ENCODE measurements at regions of chr10 and their contacts with region 1.

Region 1: DNA sequence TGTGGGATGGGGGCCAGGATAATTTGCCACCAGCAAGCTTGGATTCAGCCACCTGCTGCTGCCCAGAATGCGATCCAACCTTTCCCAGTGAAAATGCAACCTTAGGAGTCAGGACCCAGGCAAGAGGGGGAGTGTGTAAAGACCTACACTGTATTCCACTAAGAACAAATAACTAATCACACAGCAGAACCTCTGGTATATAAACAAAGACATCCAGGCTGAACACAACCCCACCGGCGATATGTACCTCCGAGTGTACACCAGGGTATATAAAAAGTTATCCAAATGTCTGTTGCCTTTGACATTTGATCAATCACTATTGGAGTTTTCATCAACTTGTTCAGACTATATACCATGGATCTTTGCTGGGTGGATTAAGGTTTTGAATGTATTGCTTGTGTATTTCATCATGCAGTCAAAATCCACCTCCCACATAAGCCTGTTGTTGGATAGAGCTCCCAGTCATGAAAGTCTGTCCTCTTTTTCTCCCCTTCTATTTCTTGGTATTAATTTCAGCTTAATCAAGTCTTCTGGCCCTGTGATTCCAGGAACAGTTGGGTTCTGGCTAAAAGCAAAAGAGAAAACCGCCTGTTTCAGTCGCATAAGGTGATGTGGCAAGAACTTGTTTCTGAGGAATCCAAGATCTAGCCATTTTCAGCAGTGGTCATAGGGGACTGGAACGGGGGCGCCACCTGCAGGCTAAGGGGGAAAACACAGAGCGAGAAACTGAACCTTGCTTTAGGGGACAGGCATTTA is 290.7 kb downstream of the CCDC3 start:
- DNase-seq: peak; percentile 69
- H3K4me3 ChIP-seq: peak overlapping the region in 1 of 2 experiments; percentile 18; a peak in 1 of 4 replicates
- H3K27ac ChIP-seq: peak overlapping the region in 1 of 2 experiments; percentile 92; a peak in 1 of 4 replicates
- H3K4me1 ChIP-seq: peaks cover 15 to 49% of the 10 kb centered on the region in 2 experiments
- H3K27me3 ChIP-seq: no peaks in the 10 kb centered on the region
- CTCF ChIP-seq: peak; percentile 95
- EP300 ChIP-seq: no peak
- RAD21 ChIP-seq: peak; percentile 89

Region 2: GRCh38 chr10:12264204-12264940 is 446.4 kb before region 1 on chr10:
- CTCF ChIA-PET with region 1: interaction called, 111 read pairs
- POLR2A ChIA-PET with region 1: no interaction called
- DNase-seq: peak; percentile 88
- H3K4me3 ChIP-seq: peak overlapping the region; percentile 45 to 60
- H3K27ac ChIP-seq: peak overlapping the region in 1 of 2 experiments; percentile 45; a peak in 1 of 4 replicates
- H3K4me1 ChIP-seq: no peaks in the 10 kb centered on the region; a peak in 1 of 4 replicates
- H3K27me3 ChIP-seq: no peaks in the 10 kb centered on the region
- CTCF ChIP-seq: peak; percentile 90
- EP300 ChIP-seq: no peak; a peak in 1 of 4 replicates
- RAD21 ChIP-seq: peak; percentile 94

Region 3: GRCh38 chr10:12726971-12727831 is 16.4 kb after region 1 on chr10:
- CTCF ChIA-PET with region 1: interaction called, 12 read pairs
- POLR2A ChIA-PET with region 1: no interaction called
- DNase-seq: no peak
- H3K4me3 ChIP-seq: no peak overlapping the region
- H3K27ac ChIP-seq: no peak overlapping the region
- H3K4me1 ChIP-seq: peaks cover 0 to 10% of the 10 kb centered on the region in 2 experiments; a peak in 1 of 4 replicates
- H3K27me3 ChIP-seq: no peaks in the 10 kb centered on the region
- CTCF ChIP-seq: no peak
- EP300 ChIP-seq: no peak
- RAD21 ChIP-seq: no peak

Region 4: GRCh38 chr10:13056456-13057077 is 345.8 kb after region 1 on chr10:
- CTCF ChIA-PET with region 1: interaction called, 12 read pairs
- POLR2A ChIA-PET with region 1: no interaction called
- DNase-seq: peak; percentile 64
- H3K4me3 ChIP-seq: no peak overlapping the region
- H3K27ac ChIP-seq: no peak overlapping the region
- H3K4me1 ChIP-seq: no peaks in the 10 kb centered on the region; a peak in 1 of 4 replicates
- H3K27me3 ChIP-seq: no peaks in the 10 kb centered on the region
- CTCF ChIP-seq: peak; percentile 42
- EP300 ChIP-seq: no peak
- RAD21 ChIP-seq: peak; percentile 70

Region 5: GRCh38 chr10:13074561-13075451 is 364.0 kb after region 1 on chr10:
- CTCF ChIA-PET with region 1: interaction called, 86 read pairs
- POLR2A ChIA-PET with region 1: interaction called, 3 read pairs
- DNase-seq: peak; percentile 83
- H3K4me3 ChIP-seq: peak overlapping the region in 1 of 2 experiments; percentile 21; a peak in 1 of 4 replicates
- H3K27ac ChIP-seq: no peak overlapping the region
- H3K4me1 ChIP-seq: no peaks in the 10 kb centered on the region
- H3K27me3 ChIP-seq: no peaks in the 10 kb centered on the region
- CTCF ChIP-seq: peak; percentile 90
- EP300 ChIP-seq: no peak
- RAD21 ChIP-seq: peak; percentile 96